CD8-positive, alpha-beta T cell (primary cell): ENCODE measurements at regions of chr13 and their contacts with region 1.

Region 1: GRCh38 chr13:99347911-99348451 is 40.8 kb upstream of the GPR183 start:
- DNase-seq: no peak
- ATAC-seq: no peak
- H3K4me3 ChIP-seq: no peak overlapping the region
- H3K4me3 Mint-ChIP-seq: no peak overlapping the region
- H3K27ac ChIP-seq: peak overlapping the region in 1 of 2 experiments; percentile 6
- H3K27ac Mint-ChIP-seq: peak overlapping the region; percentile 82
- H3K4me1 ChIP-seq: peaks cover 34% of the 10 kb centered on the region
- H3K4me1 Mint-ChIP-seq: peaks cover 83% of the 10 kb centered on the region
- H3K27me3 ChIP-seq: no peaks in the 10 kb centered on the region
- H3K27me3 Mint-ChIP-seq: no peaks in the 10 kb centered on the region
- CTCF ChIP-seq: no peak

Region 2: GRCh38 chr13:99314640-99315176 is 33.3 kb before region 1 on chr13:
- CTCF ChIA-PET with region 1: interaction called, 3 read pairs
- POLR2A ChIA-PET with region 1: interaction called, 13 read pairs
- intact Hi-C with region 1: loop called in 1 of 2 experiments (anchors 5 kb)
- DNase-seq: peak in 5 of 9 experiments; percentile 39 to 88 (median 66)
- ATAC-seq: peak; percentile 82
- H3K4me3 ChIP-seq: peak overlapping the region; percentile 6 to 30
- H3K4me3 Mint-ChIP-seq: peak overlapping the region; percentile 68
- H3K27ac ChIP-seq: peak overlapping the region; percentile 67 to 89
- H3K27ac Mint-ChIP-seq: peak overlapping the region; percentile 94
- H3K4me1 ChIP-seq: peaks cover 68% of the 10 kb centered on the region
- H3K4me1 Mint-ChIP-seq: peaks cover 77% of the 10 kb centered on the region
- H3K27me3 ChIP-seq: no peaks in the 10 kb centered on the region
- H3K27me3 Mint-ChIP-seq: no peaks in the 10 kb centered on the region
- CTCF ChIP-seq: no peak

Region 3: DNA sequence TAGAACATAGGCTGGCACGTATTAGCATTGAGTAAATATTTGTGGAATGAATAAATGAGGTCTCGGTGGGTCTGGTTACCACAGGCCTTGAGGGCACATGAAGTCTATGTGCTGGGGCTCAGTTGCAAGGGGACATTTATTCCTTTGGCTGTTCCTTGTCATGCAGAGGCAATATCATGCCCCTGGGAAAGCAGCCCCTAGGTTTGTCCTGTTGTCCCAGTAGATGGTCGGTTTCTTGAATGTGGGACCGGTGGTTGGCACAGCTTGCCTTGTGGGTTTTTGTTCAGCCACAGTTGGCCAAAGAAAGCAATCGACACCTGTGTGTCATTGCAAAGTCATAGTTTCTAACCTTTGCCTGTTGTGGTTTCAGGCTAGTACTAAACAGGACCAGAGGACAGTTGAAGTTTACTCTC is 16.1 kb before region 1 on chr13:
- CTCF ChIA-PET with region 1: interaction called, 4 read pairs
- POLR2A ChIA-PET with region 1: interaction called, 5 read pairs
- intact Hi-C with region 1: loop called in 1 of 2 experiments (anchors 2 kb)
- DNase-seq: no peak
- ATAC-seq: no peak
- H3K4me3 ChIP-seq: no peak overlapping the region
- H3K4me3 Mint-ChIP-seq: no peak overlapping the region
- H3K27ac ChIP-seq: no peak overlapping the region
- H3K27ac Mint-ChIP-seq: peak overlapping the region; percentile 56
- H3K4me1 ChIP-seq: peaks cover 11% of the 10 kb centered on the region
- H3K4me1 Mint-ChIP-seq: peaks cover 48% of the 10 kb centered on the region
- H3K27me3 ChIP-seq: no peaks in the 10 kb centered on the region
- H3K27me3 Mint-ChIP-seq: no peaks in the 10 kb centered on the region
- CTCF ChIP-seq: no peak

Region 4: DNA sequence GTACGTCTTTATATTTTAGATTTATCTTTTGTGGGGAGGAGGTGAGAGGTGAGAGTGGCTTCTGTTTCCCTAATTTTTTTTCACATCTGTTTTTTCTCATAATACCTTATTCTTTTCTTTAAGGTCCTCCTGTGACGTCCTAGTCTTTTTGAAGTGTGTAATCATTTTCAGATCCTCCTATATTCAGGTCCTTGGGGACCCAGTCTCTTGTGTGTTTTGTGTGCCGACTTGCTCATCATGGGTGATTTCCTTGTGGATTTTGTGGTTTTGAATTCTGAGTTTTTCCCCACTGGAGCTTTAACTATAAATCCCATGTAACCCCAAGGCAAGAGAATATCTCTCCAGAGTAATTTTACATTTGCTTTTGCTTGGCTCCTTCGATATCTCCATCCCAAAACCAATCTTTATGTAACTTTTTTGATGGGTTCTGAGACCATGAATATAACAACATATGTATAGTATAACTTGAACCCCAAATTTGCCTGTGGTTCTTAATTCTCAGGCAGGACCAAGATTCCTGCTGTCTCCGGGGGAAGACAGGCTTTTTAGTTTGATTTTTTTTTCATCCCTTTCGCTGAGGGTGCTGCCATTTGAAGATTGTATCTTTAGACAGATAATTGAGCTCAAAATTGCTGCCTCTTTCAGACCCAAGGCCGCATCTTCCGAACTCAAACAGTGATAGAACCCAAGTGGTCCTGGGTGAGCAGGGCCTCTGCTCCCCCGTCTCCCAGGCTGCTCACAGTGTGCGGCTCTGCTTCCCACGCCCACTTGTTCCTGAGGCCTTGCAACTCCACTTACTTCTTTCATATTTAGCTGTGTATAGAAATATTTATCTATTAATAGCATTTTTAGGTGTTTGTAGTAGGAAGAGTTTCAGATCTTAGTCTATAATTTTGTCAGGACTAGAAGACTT is 18.4 kb after region 1 on chr13:
- CTCF ChIA-PET with region 1: interaction called, 9 read pairs
- POLR2A ChIA-PET with region 1: interaction called, 24 read pairs
- intact Hi-C with region 1: no loop called
- DNase-seq: peak in 4 of 9 experiments; percentile 10 to 53 (median 28)
- ATAC-seq: no peak
- H3K4me3 ChIP-seq: no peak overlapping the region
- H3K4me3 Mint-ChIP-seq: peak overlapping the region; percentile 53
- H3K27ac ChIP-seq: peak overlapping the region; percentile 24 to 61
- H3K27ac Mint-ChIP-seq: peak overlapping the region; percentile 97
- H3K4me1 ChIP-seq: peaks cover 78% of the 10 kb centered on the region
- H3K4me1 Mint-ChIP-seq: peaks cover 88% of the 10 kb centered on the region
- H3K27me3 ChIP-seq: no peaks in the 10 kb centered on the region
- H3K27me3 Mint-ChIP-seq: no peaks in the 10 kb centered on the region
- CTCF ChIP-seq: no peak

Region 5: GRCh38 chr13:99374994-99375737 is 27.2 kb after region 1 on chr13:
- CTCF ChIA-PET with region 1: interaction called, 105 read pairs
- POLR2A ChIA-PET with region 1: interaction called, 24 read pairs
- intact Hi-C with region 1: no loop called
- DNase-seq: peak in 8 of 9 experiments; percentile 60 to 91 (median 80)
- ATAC-seq: peak; percentile 89
- H3K4me3 ChIP-seq: peak overlapping the region in 1 of 2 experiments; percentile 18
- H3K4me3 Mint-ChIP-seq: peak overlapping the region; percentile 61
- H3K27ac ChIP-seq: peak overlapping the region; percentile 55 to 85
- H3K27ac Mint-ChIP-seq: peak overlapping the region; percentile 97
- H3K4me1 ChIP-seq: peaks cover 75% of the 10 kb centered on the region
- H3K4me1 Mint-ChIP-seq: peaks cover 92% of the 10 kb centered on the region
- H3K27me3 ChIP-seq: no peaks in the 10 kb centered on the region
- H3K27me3 Mint-ChIP-seq: no peaks in the 10 kb centered on the region
- CTCF ChIP-seq: no peak

Region 6: GRCh38 chr13:99749271-99750019 is 401.5 kb after region 1 on chr13:
- CTCF ChIA-PET with region 1: no interaction called
- POLR2A ChIA-PET with region 1: no interaction called
- intact Hi-C with region 1: no loop called
- DNase-seq: no peak
- ATAC-seq: no peak
- H3K4me3 ChIP-seq: no peak overlapping the region
- H3K4me3 Mint-ChIP-seq: no peak overlapping the region
- H3K27ac ChIP-seq: no peak overlapping the region
- H3K27ac Mint-ChIP-seq: no peak overlapping the region
- H3K4me1 ChIP-seq: no peaks in the 10 kb centered on the region
- H3K4me1 Mint-ChIP-seq: peaks cover 2% of the 10 kb centered on the region
- H3K27me3 ChIP-seq: no peaks in the 10 kb centered on the region
- H3K27me3 Mint-ChIP-seq: no peaks in the 10 kb centered on the region
- CTCF ChIP-seq: no peak